Heart left ventricle (tissue), 16 donors: ENCODE measurements at regions of chr4 and their contacts with region 1.

Region 1: GRCh38 chr4:16916719-16917337 is 18.4 kb upstream of the LDB2 start:
- DNase-seq: peak in 4 of 5 donors; percentile 27 to 68 (median 48)
- ATAC-seq: peak in 3 of 4 donors; percentile 22 to 69 (median 45)
- H3K4me3 ChIP-seq: no peak overlapping the region
- H3K27ac ChIP-seq: no peak overlapping the region
- H3K4me1 ChIP-seq: no peaks in the 10 kb centered on the region
- H3K27me3 ChIP-seq: no peaks in the 10 kb centered on the region
- CTCF ChIP-seq: peak; percentile 58 to 86 (median 71)
- POLR2A ChIP-seq: no peak

Region 2: GRCh38 chr4:16505726-16506125 is 411.1 kb before region 1 on chr4:
- intact Hi-C with region 1: loop called in 1 of 10 experiments (anchors 10 kb)
- DNase-seq: peak in 2 of 5 donors; percentile 10 to 26
- ATAC-seq: peak in 3 of 4 donors; percentile 15 to 54 (median 34)
- H3K4me3 ChIP-seq: no peak overlapping the region
- H3K27ac ChIP-seq: no peak overlapping the region
- H3K4me1 ChIP-seq: no peaks in the 10 kb centered on the region
- H3K27me3 ChIP-seq: no peaks in the 10 kb centered on the region
- CTCF ChIP-seq: peak in 9 of 12 donors; percentile 18 to 48 (median 38)
- POLR2A ChIP-seq: no peak